ENCODE measurements at regions of chr9 and their contacts with region 1.

Region 1: DNA sequence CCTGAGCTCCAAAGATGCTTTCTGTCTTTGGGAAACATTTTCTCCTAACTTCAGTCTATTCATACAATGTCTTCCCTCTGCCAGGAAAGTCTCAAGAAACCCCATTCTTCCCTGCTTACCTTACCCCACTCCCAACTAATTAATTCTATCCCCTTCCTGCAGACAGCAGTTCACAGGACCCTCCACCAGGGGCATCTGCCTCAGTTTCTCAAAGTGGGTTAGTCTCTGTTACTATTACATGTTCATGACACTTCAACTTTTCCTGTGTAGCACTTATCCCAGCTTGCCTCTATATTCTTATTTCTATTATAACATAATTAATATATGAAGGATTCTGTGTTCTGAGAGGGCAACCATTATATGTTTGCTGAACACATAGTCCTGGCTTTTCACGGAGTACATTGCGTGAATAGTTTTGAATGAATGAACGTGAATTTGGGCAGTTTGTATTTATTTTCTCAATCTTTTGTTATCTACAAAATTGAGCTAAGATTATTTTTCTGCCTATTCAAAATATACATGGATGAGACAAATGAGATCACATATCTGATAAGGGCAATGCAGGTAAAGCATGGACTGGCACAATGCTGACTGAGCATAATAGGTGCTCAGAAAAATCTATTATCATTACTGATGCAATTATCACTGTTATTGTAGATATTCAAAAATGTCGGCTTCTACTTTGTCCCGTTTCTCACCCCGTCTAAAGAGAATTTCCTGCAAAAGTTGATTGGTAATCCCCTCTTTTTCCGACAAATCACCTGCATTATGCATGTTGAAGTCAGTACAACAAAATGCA is 341.1 kb downstream of the BRINP1 start:
- DNase-seq: no peak
- H3K4me3 ChIP-seq: no peak overlapping the region
- H3K27ac ChIP-seq: peak overlapping the region; percentile 78 to 80
- H3K4me1 ChIP-seq: peaks cover 0 to 53% (median 39%) of the 10 kb centered on the region in 4 donors
- H3K27me3 ChIP-seq: no peaks in the 10 kb centered on the region
- CTCF ChIP-seq: peak in 1 of 2 experiments; percentile 23

Region 2: GRCh38 chr9:119004620-119004994 is 23.5 kb before region 1 on chr9:
- intact Hi-C with region 1: loop called (anchors 1 kb)
- DNase-seq: peak; percentile 91 to 95
- H3K4me3 ChIP-seq: no peak overlapping the region
- H3K27ac ChIP-seq: peak overlapping the region; percentile 79 to 82
- H3K4me1 ChIP-seq: peaks cover 0 to 33% (median 26%) of the 10 kb centered on the region in 4 donors
- H3K27me3 ChIP-seq: no peaks in the 10 kb centered on the region
- CTCF ChIP-seq: no peak

Region 3: DNA sequence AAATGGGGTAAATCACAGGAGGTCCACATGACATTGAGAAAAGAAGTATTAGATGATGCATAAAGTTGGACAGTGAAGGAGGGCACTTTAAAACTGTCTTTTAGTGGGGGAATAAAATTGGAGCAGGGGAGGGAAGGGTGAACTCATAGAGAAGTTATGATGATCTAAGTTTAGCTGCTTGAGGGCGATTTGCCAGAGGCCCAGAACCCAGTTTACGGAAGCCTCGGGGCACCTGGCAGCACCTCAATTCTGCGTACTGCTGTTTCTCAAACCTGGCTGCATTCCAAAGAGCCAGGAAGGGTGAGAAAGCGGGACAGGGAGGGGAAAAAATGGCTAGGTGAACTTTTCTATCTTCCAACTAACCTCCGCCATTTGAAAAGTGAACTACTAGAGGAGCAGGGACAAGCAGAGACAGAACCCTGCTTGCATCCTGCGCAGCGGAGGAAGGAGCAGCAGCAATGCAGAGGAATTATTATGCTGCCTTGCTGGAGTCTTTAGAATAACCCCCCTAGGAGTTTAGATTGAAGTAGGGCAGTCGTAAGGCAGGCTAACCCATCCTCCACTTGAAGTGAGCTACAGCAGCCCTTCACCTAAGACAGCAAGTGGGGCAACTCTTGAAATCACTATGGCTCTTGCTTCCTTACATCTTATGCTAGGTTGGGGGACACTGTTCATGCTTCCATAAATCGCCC is 24.4 kb after region 1 on chr9:
- intact Hi-C with region 1: no loop called
- DNase-seq: peak in 1 of 2 donors; percentile 71
- H3K4me3 ChIP-seq: peak overlapping the region in 1 of 2 donors; percentile 19
- H3K27ac ChIP-seq: peak overlapping the region; percentile 17 to 59
- H3K4me1 ChIP-seq: peaks cover 0 to 24% (median 20%) of the 10 kb centered on the region in 4 donors
- H3K27me3 ChIP-seq: no peaks in the 10 kb centered on the region
- CTCF ChIP-seq: no peak

Measured in tibial artery (tissue), 4 donors.